ENCODE measurements at regions of chr2 and their contacts with region 1.

Region 1: GRCh38 chr2:100610381-100610831 is 47.6 kb downstream of the PDCL3 start:
- DNase-seq: peak; percentile 65
- CTCF ChIP-seq: peak; percentile 73

Region 2: GRCh38 chr2:100359576-100359975 is 250.8 kb before region 1 on chr2:
- in situ Hi-C with region 1: no loop called
- DNase-seq: no peak
- CTCF ChIP-seq: no peak

Region 3: GRCh38 chr2:100984892-100985379 is 374.5 kb after region 1 on chr2:
- in situ Hi-C with region 1: loop called (anchors 5 kb)
- DNase-seq: peak; percentile 84
- CTCF ChIP-seq: peak; percentile 94

Measured in GM13977 (cell line).